ENCODE measurements at regions of chr12 and their contacts with region 1.

Region 1: GRCh38 chr12:62123721-62124203 is 136.4 kb upstream of the USP15 start:
- H3K4me3 Mint-ChIP-seq: no peak overlapping the region
- H3K27ac Mint-ChIP-seq: no peak overlapping the region
- H3K4me1 Mint-ChIP-seq: peaks cover 14% of the 10 kb centered on the region
- H3K27me3 Mint-ChIP-seq: peaks cover 2% of the 10 kb centered on the region

Region 2: DNA sequence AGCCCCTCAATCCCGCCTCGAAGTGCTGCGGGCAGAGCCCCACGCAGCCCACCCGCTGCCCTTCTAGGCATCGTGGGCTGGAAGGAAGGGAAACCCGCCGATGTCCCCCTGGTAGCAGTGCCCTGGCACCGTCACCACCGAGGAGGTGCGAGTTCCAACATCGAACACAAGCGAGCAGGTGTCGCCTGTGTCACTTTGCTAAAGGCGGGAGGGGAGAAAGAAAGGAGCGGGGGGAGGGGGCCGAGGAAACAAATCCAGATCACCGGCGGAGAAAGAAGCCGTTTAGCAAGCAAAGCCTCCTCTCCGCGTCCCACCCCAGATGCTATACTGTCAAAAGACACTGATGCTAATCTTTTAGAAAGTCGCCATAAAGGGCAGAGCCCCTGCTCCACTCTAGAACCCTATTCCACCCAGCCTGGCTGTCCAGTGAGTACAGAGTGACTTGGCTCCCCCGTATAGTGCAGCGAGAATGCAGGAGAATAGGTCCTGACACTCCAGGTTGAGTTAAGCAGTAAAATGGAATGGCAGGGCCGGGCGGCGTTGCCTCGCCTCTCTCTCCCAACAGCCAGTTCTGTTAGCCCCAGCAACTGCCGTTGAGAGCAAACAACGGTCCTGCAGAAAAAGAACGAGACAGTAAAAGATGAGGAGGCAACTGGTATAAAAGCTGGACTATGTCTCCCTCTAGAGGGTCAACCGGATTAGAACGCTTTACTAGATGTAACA is 68.6 kb after region 1 on chr12:
- intact Hi-C with region 1: loop called (anchors 1 kb)
- H3K4me3 Mint-ChIP-seq: peak overlapping the region; percentile 81
- H3K27ac Mint-ChIP-seq: peak overlapping the region; percentile 51
- H3K4me1 Mint-ChIP-seq: peaks cover 30% of the 10 kb centered on the region
- H3K27me3 Mint-ChIP-seq: peaks cover 31% of the 10 kb centered on the region

Measured in dendritic cell treated with granulocyte-macrophage colony-stimulating factor and Interleukin-4, amounts not matched to agents 40 ng/mL and 50 ng/mL, for 4 days (primary cell).